HCT116 (cell line): ENCODE measurements at regions of chr11 and their contacts with region 1.

Region 1: GRCh38 chr11:9534791-9535781 is 38.4 kb upstream of the WEE1 start:
- DNase-seq: peak; percentile 44
- ATAC-seq: peak; percentile 78
- H3K4me3 ChIP-seq: no peak overlapping the region
- H3K27ac ChIP-seq: no peak overlapping the region
- H3K4me1 ChIP-seq: peaks cover 5 to 14% of the 10 kb centered on the region in 2 experiments; a peak in 3 of 4 replicates
- H3K27me3 ChIP-seq: no peaks in the 10 kb centered on the region
- CTCF ChIP-seq: peak; percentile 66 to 96 (median 95)
- POLR2A ChIP-seq: no peak
- RAD21 ChIP-seq: peak; percentile 73

Region 2: GRCh38 chr11:9565822-9566560 is 30.9 kb after region 1 on chr11:
- CTCF ChIA-PET with region 1: interaction called, 11 read pairs
- POLR2A ChIA-PET with region 1: interaction called, 5 read pairs
- RAD21 ChIA-PET with region 1: no interaction called
- intact Hi-C with region 1: no loop called
- DNase-seq: peak; percentile 100
- ATAC-seq: peak; percentile 91
- H3K4me3 ChIP-seq: peak overlapping the region; percentile 11 to 20; a peak in 3 of 4 replicates
- H3K27ac ChIP-seq: peak overlapping the region; percentile 57
- H3K4me1 ChIP-seq: peaks cover 41 to 69% of the 10 kb centered on the region in 2 experiments
- H3K27me3 ChIP-seq: no peaks in the 10 kb centered on the region
- CTCF ChIP-seq: no peak
- POLR2A ChIP-seq: no peak
- RAD21 ChIP-seq: peak; percentile 34

Region 3: DNA sequence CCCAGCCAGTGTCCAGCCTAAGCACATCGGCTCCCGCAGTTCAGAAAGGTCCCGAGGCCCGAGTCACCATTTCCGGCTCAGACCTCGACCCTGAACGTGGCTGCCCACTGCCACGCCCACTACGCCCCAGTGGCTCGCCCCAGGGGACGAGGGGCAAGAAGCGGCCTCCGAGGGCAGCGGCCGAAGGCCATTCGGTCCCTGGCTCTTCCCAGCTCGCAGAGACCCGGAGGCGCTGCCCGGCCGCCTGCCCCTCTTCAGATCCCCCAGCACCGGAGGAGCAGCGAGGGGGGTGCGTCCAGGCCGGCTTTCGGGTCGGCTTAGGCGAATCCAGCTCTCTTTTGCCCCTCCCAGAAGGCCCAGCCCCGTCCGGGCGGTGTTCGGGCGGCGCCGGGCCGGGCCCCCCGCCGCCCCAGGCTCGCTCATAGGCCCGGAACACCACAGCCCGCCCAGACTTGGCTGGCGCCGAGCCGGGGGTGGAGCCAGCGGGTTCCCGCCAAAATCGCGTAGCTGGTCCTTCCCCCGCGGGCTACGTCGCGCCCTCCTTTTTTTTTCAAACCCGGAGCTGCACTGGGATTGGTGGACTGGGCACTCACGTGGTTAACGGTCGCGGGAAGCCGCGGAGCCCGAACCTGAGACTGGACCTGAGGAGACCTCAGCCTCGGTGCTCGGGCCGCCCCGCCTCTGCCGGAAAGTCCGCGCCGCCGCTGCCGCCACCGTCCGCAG is 38.1 kb after region 1 on chr11 and contains the start of gene WEE1:
- CTCF ChIA-PET with region 1: interaction called, 10 read pairs
- POLR2A ChIA-PET with region 1: interaction called, 3 read pairs
- RAD21 ChIA-PET with region 1: no interaction called
- intact Hi-C with region 1: no loop called
- DNase-seq: peak; percentile 96
- ATAC-seq: peak; percentile 91
- H3K4me3 ChIP-seq: peak within 1 kb of the TSS; percentile 86 to 94
- H3K27ac ChIP-seq: peak within 1 kb of the TSS; percentile 96
- H3K4me1 ChIP-seq: peaks cover 26 to 53% of the 10 kb centered on the region in 2 experiments
- H3K27me3 ChIP-seq: no peaks in the 10 kb centered on the region
- CTCF ChIP-seq: no peak
- POLR2A ChIP-seq: no peak
- RAD21 ChIP-seq: no peak
- total RNA-seq, gene WEE1: 50.8 TPM

Region 4: GRCh38 chr11:9613118-9613829 is 78.2 kb after region 1 on chr11:
- CTCF ChIA-PET with region 1: interaction called, 21 read pairs
- POLR2A ChIA-PET with region 1: interaction called, 4 read pairs
- RAD21 ChIA-PET with region 1: no interaction called
- intact Hi-C with region 1: loop called (anchors 5 kb)
- DNase-seq: peak; percentile 92
- ATAC-seq: peak; percentile 80
- H3K4me3 ChIP-seq: peak overlapping the region; percentile 42 to 58
- H3K27ac ChIP-seq: peak overlapping the region; percentile 92
- H3K4me1 ChIP-seq: peaks cover 29 to 61% of the 10 kb centered on the region in 2 experiments
- H3K27me3 ChIP-seq: no peaks in the 10 kb centered on the region
- CTCF ChIP-seq: peak; percentile 87 to 98 (median 94)
- POLR2A ChIP-seq: no peak
- RAD21 ChIP-seq: peak; percentile 94

Region 5: DNA sequence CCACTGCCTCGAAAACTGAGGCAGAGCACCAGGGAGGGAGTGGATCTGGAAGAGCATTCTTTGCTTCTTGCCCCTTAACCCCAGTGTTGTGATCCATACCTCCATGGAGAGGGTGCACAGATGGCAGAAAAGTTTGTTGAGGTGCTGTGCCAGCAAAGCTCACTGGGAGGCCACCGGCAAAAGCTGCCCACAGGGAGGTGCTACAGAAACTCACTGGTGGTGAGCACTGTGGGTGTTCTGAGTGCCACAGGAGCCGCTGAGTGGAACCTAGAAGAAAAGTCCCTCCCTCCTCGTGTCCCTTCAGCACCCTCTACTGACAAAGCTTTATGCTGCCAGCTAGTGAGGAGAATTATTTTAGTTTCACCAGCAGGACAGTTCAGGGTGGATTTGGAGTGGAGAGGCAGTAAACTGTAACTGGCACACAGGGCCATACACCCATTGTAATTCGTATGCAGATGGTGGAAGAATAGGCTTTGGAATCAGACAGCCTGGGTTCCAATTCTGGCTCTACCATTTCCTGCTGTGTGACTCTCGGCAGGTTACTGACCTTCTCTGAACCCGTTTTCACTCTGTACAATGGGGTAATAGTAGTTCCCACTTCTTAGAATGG is 213.4 kb after region 1 on chr11:
- CTCF ChIA-PET with region 1: interaction called, 25 read pairs
- POLR2A ChIA-PET with region 1: no interaction called
- RAD21 ChIA-PET with region 1: interaction called in 1 of 2 experiments, 3 read pairs
- intact Hi-C with region 1: loop called (anchors 2 kb)
- DNase-seq: peak; percentile 70
- ATAC-seq: peak; percentile 98
- H3K4me3 ChIP-seq: no peak overlapping the region
- H3K27ac ChIP-seq: no peak overlapping the region
- H3K4me1 ChIP-seq: peaks cover 3 to 8% of the 10 kb centered on the region in 2 experiments; a peak in 3 of 4 replicates
- H3K27me3 ChIP-seq: no peaks in the 10 kb centered on the region
- CTCF ChIP-seq: peak; percentile 73 to 96 (median 79)
- POLR2A ChIP-seq: no peak
- RAD21 ChIP-seq: peak; percentile 92